ENCODE measurements at regions of chr9 and their contacts with region 1.

Region 1: DNA sequence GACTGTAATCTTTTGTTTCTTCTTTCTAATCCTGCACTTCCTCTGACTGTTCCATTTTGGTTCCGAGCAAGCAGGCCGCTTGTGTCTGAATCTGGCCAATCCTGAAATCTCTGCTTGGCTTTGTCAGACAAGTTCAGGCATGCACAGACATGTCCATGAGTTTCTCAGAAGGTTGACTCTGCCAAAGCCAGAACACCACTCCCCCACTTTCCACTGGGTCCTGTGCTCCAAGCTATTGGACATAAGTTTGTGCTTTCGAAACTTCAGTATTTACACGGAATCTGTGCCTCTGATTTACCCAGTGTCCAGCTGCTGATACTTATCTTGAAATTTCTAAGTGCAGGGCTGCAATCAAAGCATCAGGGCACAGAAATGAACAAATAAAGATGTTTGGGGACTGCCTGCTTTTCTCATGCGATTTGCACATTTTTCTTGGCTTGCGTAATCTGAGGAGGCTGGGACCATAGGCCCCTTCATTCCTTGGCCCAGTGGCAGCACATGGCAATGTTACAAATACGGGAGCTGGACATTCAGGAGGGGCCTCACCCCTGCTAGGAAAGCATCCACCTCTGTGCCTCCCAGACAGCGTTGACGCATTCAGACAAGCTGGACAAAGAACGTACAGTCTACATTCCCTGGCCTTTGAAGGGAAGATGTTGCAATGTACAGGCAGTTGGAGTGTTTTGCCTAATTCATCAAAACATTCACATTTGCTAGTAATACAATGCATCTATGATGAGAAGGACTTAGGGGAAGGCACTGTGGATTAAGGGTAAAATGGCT is 209.2 kb upstream of the PAPPA start:
- DNase-seq: peak; percentile 100
- ATAC-seq: peak; percentile 87
- H3K4me3 ChIP-seq: no peak overlapping the region
- H3K27ac ChIP-seq: peak overlapping the region; percentile 96
- H3K4me1 ChIP-seq: peaks cover 25% of the 10 kb centered on the region
- H3K27me3 ChIP-seq: no peaks in the 10 kb centered on the region
- CTCF ChIP-seq: no peak
- POLR2A ChIP-seq: peak; percentile 65
- RAD21 ChIP-seq: peak; percentile 32; the same call in 1 of the 2 replicates

Region 2: DNA sequence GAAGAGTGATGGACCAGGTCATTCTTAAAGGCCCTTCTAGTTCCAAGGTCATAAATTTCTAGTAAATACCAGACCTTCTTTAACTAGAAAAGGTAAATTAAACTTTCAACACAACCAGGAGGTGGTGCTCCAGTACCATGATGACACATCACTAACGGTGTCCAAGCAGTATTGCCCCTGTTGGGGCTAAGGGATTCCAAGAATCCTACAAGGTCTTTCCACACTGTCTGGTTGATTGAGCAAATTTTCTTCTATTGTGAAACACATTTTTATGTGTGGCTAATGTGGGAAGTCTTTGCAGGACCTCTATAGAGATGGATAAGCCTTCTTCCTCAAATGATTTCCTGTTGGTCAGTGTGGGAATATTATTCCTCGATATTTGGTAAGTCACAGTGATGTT is 250.3 kb before region 1 on chr9:
- CTCF ChIA-PET with region 1: no interaction called
- POLR2A ChIA-PET with region 1: no interaction called
- dilution Hi-C with region 1: no loop called
- in situ Hi-C with region 1: no loop called
- intact Hi-C with region 1: loop called (anchors 1 kb)
- DNase-seq: peak; percentile 93
- ATAC-seq: peak; percentile 69
- H3K4me3 ChIP-seq: no peak overlapping the region
- H3K27ac ChIP-seq: no peak overlapping the region
- H3K4me1 ChIP-seq: peaks cover 13% of the 10 kb centered on the region
- H3K27me3 ChIP-seq: no peaks in the 10 kb centered on the region
- CTCF ChIP-seq: peak; percentile 79
- POLR2A ChIP-seq: no peak
- RAD21 ChIP-seq: peak; percentile 86

Region 3: GRCh38 chr9:115883457-115884329 is 60.7 kb before region 1 on chr9:
- CTCF ChIA-PET with region 1: interaction called, 3 read pairs
- POLR2A ChIA-PET with region 1: interaction called, 5 read pairs
- dilution Hi-C with region 1: no loop called
- in situ Hi-C with region 1: no loop called
- intact Hi-C with region 1: loop called (anchors 2 kb)
- DNase-seq: peak; percentile 60
- ATAC-seq: peak; percentile 75
- H3K4me3 ChIP-seq: no peak overlapping the region
- H3K27ac ChIP-seq: peak overlapping the region; percentile 1; the same call in 1 of the 2 replicates
- H3K4me1 ChIP-seq: peaks cover 11% of the 10 kb centered on the region
- H3K27me3 ChIP-seq: no peaks in the 10 kb centered on the region
- CTCF ChIP-seq: peak; percentile 66
- POLR2A ChIP-seq: no peak
- RAD21 ChIP-seq: peak; percentile 83

Region 4: GRCh38 chr9:115923903-115924668 is 20.3 kb before region 1 on chr9:
- CTCF ChIA-PET with region 1: interaction called, 3 read pairs
- POLR2A ChIA-PET with region 1: no interaction called
- dilution Hi-C with region 1: no loop called
- in situ Hi-C with region 1: no loop called
- intact Hi-C with region 1: loop called (anchors 2 kb)
- DNase-seq: peak; percentile 99
- ATAC-seq: peak; percentile 99
- H3K4me3 ChIP-seq: no peak overlapping the region
- H3K27ac ChIP-seq: peak overlapping the region; percentile 100
- H3K4me1 ChIP-seq: peaks cover 26% of the 10 kb centered on the region
- H3K27me3 ChIP-seq: no peaks in the 10 kb centered on the region
- CTCF ChIP-seq: no peak
- POLR2A ChIP-seq: no peak
- RAD21 ChIP-seq: no peak; the same call in none of the 2 replicates

Region 5: DNA sequence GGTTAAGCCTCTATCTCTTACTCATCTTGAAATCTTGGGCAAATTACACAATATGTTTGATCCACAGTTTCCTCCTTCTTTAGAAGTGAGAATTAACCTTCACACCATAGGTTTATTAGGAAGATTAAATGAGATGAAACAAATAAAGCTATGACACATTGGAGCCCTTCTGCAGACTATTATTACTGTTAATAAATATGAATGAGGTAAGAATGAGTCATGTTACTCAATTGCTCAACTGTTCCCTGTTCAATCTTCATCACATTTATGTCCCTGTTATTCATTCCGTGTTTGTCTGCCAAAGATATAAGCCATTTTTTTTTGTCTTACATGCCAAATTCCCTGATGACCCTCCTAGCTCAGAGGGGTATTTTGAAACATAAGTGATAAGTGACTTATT is 157.2 kb after region 1 on chr9:
- CTCF ChIA-PET with region 1: no interaction called
- POLR2A ChIA-PET with region 1: no interaction called
- dilution Hi-C with region 1: no loop called
- in situ Hi-C with region 1: no loop called
- intact Hi-C with region 1: loop called (anchors 2 kb)
- DNase-seq: peak; percentile 84
- ATAC-seq: 0 out of 2 replicates have a peak, but pooled peaks have one; percentile 4
- H3K4me3 ChIP-seq: no peak overlapping the region
- H3K27ac ChIP-seq: no peak overlapping the region
- H3K4me1 ChIP-seq: peaks cover 7% of the 10 kb centered on the region
- H3K27me3 ChIP-seq: no peaks in the 10 kb centered on the region
- CTCF ChIP-seq: no peak
- POLR2A ChIP-seq: no peak
- RAD21 ChIP-seq: no peak

Measured in IMR-90 (cell line).